ENCODE measurements at regions of chr1 and their contacts with region 1.

Region 1: GRCh38 chr1:9823943-9824701 is at the start of gene CLSTN1:
- DNase-seq: peak; percentile 83
- H3K4me3 Mint-ChIP-seq: peak within 1 kb of the TSS; percentile 97
- H3K27ac Mint-ChIP-seq: peak within 1 kb of the TSS; percentile 84
- H3K4me1 Mint-ChIP-seq: peaks cover 40% of the 10 kb centered on the region
- H3K27me3 Mint-ChIP-seq: peaks cover 6% of the 10 kb centered on the region
- total RNA-seq, gene CLSTN1: 48.0 and 48.6 TPM in 2 replicates

Region 2: DNA sequence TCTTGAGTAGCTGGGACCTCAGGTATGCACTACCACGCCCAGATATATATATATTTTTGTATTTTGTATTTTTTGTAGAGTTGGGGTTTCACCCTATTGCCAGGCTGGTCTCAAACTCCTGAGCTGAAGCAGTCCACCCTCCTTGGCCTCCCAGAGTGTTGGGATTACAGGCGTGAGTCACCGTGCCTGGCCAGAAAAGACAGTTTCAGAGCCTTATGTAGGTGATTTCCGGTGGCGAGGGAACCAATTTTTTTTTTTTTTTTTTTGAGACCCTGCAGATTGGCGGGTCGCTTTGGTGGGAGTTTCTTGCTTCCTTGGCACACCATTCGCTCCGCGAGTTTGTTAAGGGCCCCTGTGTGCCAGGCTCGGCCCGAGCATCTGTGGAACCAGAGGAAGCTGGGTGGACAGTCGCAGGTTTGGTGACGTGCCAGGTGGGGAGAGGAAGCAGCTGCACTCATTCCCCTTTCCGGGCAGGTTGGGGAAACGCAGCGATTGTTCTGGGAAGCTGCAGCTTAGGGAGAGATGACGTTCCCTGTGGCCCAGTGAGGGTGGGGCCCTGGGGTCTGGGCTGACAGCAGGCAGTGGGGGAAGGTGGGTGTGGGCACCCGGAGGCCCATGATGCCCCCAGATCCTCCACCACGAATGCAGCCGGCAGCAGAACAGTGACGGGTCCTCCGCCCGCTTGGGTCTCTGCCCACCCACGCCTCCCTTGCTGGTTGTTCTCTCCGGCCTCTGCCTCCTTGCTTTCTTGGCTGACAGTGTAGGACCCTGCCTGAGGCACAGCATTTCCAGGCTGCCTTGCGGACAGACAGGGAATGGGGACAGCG is 506.3 kb before region 1 on chr1:
- intact Hi-C with region 1: loop called (anchors 10 kb)
- DNase-seq: no peak
- H3K4me3 Mint-ChIP-seq: peak overlapping the region; percentile 66
- H3K27ac Mint-ChIP-seq: peak overlapping the region; percentile 79
- H3K4me1 Mint-ChIP-seq: peaks cover 63% of the 10 kb centered on the region
- H3K27me3 Mint-ChIP-seq: no peaks in the 10 kb centered on the region

Region 3: DNA sequence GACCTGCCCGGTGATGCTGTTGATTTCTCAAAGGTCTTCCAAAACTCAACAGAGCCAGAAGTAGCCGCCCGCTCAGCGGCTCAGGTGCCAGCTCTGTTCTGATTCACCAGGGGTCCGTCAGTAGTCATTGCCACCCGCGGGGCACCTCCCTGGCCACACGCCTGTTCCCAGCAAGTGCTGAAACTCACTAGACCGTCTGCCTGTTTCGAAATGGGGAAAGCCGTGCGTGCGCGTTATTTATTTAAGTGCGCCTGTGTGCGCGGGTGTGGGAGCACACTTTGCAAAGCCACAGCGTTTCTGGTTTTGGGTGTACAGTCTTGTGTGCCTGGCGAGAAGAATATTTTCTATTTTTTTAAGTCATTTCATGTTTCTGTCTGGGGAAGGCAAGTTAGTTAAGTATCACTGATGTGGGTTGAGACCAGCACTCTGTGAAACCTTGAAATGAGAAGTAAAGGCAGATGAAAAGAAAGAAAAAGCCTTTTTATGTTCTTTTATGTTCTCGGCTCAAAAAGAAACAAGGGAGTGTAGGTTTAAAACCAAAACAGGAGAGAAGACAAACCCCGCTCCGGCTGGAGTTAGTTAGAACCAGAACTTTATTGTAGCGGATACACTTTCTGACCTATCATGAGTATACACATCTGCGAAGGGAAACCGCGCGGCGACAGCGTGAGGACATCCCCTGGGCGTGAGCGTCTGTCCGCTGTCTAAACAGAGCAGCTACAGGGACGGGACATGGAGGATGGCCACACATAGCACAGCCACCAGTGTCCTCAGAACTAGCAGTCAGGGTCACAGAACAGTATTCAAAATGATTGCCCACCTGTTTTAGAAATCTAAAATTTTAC is 95.4 kb before region 1 on chr1:
- intact Hi-C with region 1: loop called (anchors 2 kb)
- DNase-seq: peak; percentile 54
- H3K4me3 Mint-ChIP-seq: peak overlapping the region; percentile 72
- H3K27ac Mint-ChIP-seq: peak overlapping the region; percentile 83
- H3K4me1 Mint-ChIP-seq: peaks cover 56% of the 10 kb centered on the region
- H3K27me3 Mint-ChIP-seq: no peaks in the 10 kb centered on the region

Region 4: GRCh38 chr1:9784508-9785133 is 39.5 kb before region 1 on chr1:
- intact Hi-C with region 1: loop called (anchors 1 kb)
- DNase-seq: peak; percentile 50
- H3K4me3 Mint-ChIP-seq: no peak overlapping the region
- H3K27ac Mint-ChIP-seq: no peak overlapping the region
- H3K4me1 Mint-ChIP-seq: peaks cover 37% of the 10 kb centered on the region
- H3K27me3 Mint-ChIP-seq: no peaks in the 10 kb centered on the region

Region 5: GRCh38 chr1:9798236-9799130 is 25.6 kb before region 1 on chr1:
- intact Hi-C with region 1: loop called (anchors 1 kb)
- DNase-seq: no peak
- H3K4me3 Mint-ChIP-seq: no peak overlapping the region
- H3K27ac Mint-ChIP-seq: no peak overlapping the region
- H3K4me1 Mint-ChIP-seq: peaks cover 33% of the 10 kb centered on the region
- H3K27me3 Mint-ChIP-seq: no peaks in the 10 kb centered on the region

Region 6: DNA sequence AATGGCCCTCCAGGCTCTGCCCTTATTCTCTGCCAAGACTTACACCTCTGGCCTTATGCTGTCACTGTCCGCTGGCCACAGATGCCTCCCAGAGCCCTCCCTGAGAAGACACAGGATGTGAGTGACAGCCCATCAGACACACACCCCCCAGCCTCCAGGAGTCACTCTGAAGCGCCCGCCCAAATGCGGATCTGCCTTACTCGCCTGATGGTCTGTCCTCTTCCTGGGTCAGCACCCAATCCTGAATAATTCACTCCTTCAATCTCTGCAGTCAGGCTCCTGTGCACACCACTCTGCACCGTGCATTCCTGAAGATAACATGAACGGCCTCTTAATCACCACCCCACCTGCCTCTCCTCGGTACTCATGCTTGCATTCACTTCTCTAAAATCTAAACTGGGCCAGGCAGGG is 15.0 kb before region 1 on chr1:
- intact Hi-C with region 1: no loop called
- DNase-seq: no peak
- H3K4me3 Mint-ChIP-seq: no peak overlapping the region
- H3K27ac Mint-ChIP-seq: no peak overlapping the region
- H3K4me1 Mint-ChIP-seq: peaks cover 25% of the 10 kb centered on the region
- H3K27me3 Mint-ChIP-seq: no peaks in the 10 kb centered on the region

Region 7: DNA sequence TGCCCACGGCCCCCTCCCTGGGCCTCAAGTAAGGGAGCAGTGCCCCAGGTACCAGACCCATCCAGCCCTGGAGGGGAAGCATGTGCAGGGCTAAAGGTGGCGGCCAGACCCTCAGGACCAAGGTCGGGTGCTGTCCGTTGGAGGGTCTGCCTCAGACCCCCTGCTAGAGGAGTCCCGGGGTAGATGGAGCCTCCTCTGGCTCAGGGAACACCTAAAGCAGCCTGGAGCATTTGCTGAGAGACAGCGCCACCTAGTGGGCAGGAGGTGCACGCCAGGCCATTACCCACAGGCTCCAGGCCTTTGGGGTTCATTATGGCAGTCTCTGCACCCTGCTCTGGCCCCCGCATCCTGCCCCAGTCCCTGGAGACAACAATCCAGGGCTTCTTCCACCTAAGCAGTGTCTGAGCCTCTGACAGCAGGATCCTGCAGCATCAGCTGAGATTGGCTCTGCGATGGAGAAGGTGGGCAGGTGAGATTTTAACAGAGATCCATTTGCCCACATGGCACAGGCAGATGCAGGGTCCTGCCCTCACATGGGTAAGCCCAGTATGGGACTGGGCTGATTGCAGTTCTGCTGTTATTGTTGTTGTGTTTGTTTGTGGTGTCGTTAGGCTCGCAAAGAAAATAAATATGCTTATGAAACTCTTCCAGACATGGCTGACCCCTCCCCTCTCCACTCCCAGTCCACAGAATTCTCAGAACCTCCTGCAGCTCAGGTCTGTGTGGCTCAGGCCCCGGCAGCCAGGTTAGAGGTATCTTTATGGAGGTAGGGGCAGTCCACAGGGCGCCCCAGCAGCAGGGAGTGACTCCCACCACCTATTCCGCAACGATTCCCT is 43.5 kb after region 1 on chr1:
- intact Hi-C with region 1: loop called (anchors 2 kb)
- DNase-seq: peak; percentile 79
- H3K4me3 Mint-ChIP-seq: no peak overlapping the region
- H3K27ac Mint-ChIP-seq: no peak overlapping the region
- H3K4me1 Mint-ChIP-seq: no peaks in the 10 kb centered on the region
- H3K27me3 Mint-ChIP-seq: no peaks in the 10 kb centered on the region

Measured in activated T-helper 1 cell treated with anti-CD3 and anti-CD28 coated beads, Interleukin-12 subunit alpha, Interleukin-12 subunit beta, Interleukin-2, Interleukin-4 antibody, amounts not matched to agents 30 ng/mL and 10 ng/mL and 1 ng/mL, durations not matched to agents 14 hours and 24 hours and 36 hours (primary cell).